ENCODE measurements at regions of chr1 and their contacts with region 1.

Region 1: GRCh38 chr1:2174348-2175054 is 20.1 kb downstream of the FAAP20 start:
- DNase-seq: peak; percentile 87
- ATAC-seq: peak; percentile 75

Region 2: GRCh38 chr1:1833916-1834325 is 340.6 kb before region 1 on chr1:
- intact Hi-C with region 1: no loop called
- DNase-seq: no peak
- ATAC-seq: no peak

Region 3: DNA sequence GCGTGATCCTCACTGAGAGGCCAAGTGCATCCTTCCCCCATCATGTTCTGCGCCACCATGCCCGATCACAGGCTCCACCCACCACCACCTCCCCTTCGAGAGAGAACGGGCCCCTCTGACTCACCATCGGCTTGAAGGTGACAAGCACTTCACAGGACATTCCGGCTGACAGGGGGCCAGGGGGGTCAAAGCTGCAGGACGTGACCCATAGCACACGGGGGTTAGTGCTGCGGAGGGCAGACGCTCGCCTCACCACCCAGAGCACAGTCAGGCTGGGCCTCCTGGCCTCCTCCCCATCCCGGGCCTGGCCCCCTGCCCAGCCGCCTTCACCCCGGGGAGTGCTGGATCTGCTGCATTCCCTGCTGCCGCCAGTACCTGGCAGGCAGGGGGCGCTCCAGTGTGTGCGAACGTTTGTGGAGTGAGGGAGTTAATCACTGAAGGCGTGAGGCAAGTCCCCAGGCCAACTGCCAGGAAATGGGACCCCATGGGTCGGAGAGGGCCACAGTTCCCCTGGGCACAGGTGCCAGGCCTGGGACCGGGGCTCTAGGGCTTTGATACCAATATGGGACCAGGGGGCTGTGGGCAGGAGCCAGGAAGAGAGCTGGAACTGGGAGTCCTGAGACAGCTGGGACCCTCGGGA is 214.5 kb before region 1 on chr1:
- intact Hi-C with region 1: loop called (anchors 10 kb)
- DNase-seq: peak; percentile 90
- ATAC-seq: peak; percentile 94

Region 4: DNA sequence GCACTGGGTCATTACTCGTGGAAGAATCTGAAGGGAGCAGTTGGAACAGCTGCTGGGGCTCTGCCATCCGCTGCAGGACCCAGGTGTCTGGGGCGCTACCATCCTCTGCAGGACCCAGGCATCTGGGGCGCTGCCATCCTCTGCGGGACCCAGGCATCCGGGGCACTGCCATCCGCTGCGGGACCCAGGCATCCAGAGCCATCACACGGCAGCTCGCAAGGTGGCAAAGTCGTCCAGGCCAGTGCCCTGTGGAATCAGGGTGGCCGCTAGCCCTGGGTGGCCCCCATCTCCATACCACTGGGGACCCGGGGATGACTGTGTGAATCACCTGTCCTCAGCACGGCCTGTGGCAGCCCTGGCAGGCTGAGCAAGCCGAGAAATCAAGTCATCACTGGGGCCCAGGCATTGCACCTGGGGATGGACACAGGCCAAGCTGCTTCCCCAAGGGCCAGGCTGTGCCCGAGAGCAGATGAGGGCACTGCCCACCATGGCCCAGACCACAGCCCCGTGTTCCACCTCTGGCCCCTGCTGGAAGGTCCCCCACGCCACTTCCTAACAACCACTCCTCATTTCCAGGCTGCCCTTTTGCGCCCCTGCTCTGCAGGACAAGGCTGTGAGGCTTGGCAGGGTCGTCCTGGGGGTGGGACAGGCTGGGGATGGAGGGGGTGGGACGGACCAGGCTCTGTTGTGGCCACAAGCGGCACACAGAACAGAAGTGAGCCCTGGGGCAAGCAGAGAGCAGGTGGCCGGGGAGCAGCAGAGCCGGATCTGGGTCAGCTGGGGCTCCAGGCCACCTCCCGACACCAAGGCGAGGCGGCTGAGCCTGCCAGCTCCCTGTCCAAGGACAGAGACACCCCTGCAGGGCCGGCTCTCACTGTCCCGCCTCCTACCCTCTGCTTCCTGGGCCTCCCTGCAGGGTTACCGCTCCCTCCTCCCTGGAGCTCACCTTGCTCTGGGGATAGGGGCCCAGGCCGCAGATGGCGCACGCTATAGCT is 142.7 kb before region 1 on chr1:
- intact Hi-C with region 1: no loop called
- DNase-seq: no peak
- ATAC-seq: peak; percentile 19

Region 5: GRCh38 chr1:2133039-2133878 is 41.2 kb before region 1 on chr1:
- intact Hi-C with region 1: loop called (anchors 2 kb)
- DNase-seq: peak; percentile 99
- ATAC-seq: peak; percentile 93

Region 6: GRCh38 chr1:2189459-2190425 is 15.2 kb after region 1 on chr1:
- intact Hi-C with region 1: no loop called
- DNase-seq: peak; percentile 97
- ATAC-seq: peak; percentile 93